GM12878 (cell line): ENCODE measurements at regions of chr6 and their contacts with region 1.

Region 1: DNA sequence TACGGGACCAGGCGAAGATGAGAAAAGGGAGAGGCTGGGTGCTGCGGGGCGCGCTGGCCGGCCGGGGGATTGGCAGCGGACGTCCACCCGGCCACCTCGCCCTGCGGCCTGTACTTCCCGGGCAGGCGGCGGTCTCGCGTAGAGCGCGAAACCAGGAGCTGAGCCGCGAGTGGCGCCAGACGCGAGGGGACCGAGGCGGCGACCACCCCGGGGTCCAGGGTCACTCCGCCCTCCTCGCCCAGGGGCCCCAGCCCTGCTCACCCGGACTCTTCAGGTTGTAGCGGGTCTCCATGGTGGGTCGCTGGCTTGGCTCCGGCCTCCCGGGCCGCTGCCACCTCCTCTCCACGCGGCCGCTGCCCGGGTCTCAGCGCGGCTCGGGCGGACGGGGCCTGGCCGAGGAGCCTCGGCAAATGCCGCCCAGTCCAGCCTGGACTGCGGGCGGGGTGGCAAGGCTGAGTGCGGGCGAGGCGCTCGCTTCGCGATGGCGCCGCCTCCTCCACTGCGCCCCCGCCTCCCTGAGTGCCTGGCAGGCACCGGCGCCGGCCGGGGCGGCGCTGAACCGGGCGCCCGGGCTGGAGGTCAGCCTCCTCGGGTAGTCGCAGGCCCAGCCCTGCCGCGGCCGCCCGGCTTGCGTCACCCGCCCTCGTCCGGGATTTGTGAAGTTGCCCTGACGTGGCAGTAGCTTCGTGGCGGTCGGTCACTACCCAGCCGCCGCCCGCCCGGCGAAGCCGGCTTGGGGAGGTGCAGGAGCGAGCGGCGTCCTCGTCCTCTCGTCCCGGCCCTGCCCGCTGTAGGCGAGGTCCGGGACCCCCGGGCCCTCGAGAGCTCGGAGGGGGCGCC is at the start of gene UBE2J1:
- DNase-seq: no peak
- ATAC-seq: peak; percentile 79
- H3K4me3 ChIP-seq: peak within 1 kb of the TSS; percentile 98
- H3K27ac ChIP-seq: peak within 1 kb of the TSS; percentile 97
- H3K4me1 ChIP-seq: peaks cover 50% of the 10 kb centered on the region
- H3K27me3 ChIP-seq: no peaks in the 10 kb centered on the region
- CTCF ChIP-seq: no peak
- EP300 ChIP-seq: peak in 1 of 2 experiments; percentile 23; a peak in 1 of 4 replicates
- POLR2A ChIP-seq: peak; percentile 95
- RAD21 ChIP-seq: no peak
- polyA plus RNA-seq, gene UBE2J1: 48.7 to 69.1 TPM

Region 2: DNA sequence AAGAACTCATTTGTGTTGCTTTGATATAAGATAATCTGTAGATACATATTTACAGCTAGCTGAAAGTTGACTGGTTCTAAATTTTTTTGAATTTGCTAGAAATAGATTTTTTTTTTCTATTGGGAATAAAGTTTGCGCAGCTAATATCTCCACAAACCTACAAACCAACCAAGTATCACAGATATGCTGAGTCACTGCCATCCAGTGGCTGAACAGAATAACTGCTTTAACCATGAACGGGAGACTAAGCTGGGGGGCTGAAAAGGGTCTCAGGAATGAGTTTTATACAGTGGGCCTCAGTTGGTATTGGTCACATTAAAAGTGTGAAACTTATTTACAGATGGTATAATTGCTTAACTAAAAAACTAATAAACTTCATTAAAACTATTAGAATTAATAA is 859.7 kb before region 1 on chr6:
- CTCF ChIA-PET with region 1: no interaction called
- POLR2A ChIA-PET with region 1: no interaction called
- RAD21 ChIA-PET with region 1: no interaction called
- SMC1A ChIA-PET with region 1: no interaction called
- in situ Hi-C with region 1: no loop called
- intact Hi-C with region 1: no loop called
- DNase-seq: no peak
- ATAC-seq: no peak
- H3K4me3 ChIP-seq: no peak overlapping the region
- H3K27ac ChIP-seq: peak overlapping the region; percentile 91
- H3K4me1 ChIP-seq: peaks cover 16% of the 10 kb centered on the region
- H3K27me3 ChIP-seq: no peaks in the 10 kb centered on the region
- CTCF ChIP-seq: peak; percentile 10 to 27 (median 15); a peak in 2 of 6 replicates
- EP300 ChIP-seq: no peak
- POLR2A ChIP-seq: no peak
- RAD21 ChIP-seq: peak; percentile 52

Region 3: GRCh38 chr6:89066940-89067646 is 285.4 kb before region 1 on chr6:
- CTCF ChIA-PET with region 1: no interaction called
- POLR2A ChIA-PET with region 1: no interaction called
- RAD21 ChIA-PET with region 1: no interaction called
- SMC1A ChIA-PET with region 1: no interaction called
- in situ Hi-C with region 1: no loop called
- intact Hi-C with region 1: no loop called
- DNase-seq: no peak
- ATAC-seq: no peak
- H3K4me3 ChIP-seq: no peak overlapping the region
- H3K27ac ChIP-seq: no peak overlapping the region
- H3K4me1 ChIP-seq: no peaks in the 10 kb centered on the region
- H3K27me3 ChIP-seq: no peaks in the 10 kb centered on the region; a peak in 1 of 4 replicates
- CTCF ChIP-seq: no peak
- EP300 ChIP-seq: no peak
- POLR2A ChIP-seq: no peak
- RAD21 ChIP-seq: no peak

Region 4: DNA sequence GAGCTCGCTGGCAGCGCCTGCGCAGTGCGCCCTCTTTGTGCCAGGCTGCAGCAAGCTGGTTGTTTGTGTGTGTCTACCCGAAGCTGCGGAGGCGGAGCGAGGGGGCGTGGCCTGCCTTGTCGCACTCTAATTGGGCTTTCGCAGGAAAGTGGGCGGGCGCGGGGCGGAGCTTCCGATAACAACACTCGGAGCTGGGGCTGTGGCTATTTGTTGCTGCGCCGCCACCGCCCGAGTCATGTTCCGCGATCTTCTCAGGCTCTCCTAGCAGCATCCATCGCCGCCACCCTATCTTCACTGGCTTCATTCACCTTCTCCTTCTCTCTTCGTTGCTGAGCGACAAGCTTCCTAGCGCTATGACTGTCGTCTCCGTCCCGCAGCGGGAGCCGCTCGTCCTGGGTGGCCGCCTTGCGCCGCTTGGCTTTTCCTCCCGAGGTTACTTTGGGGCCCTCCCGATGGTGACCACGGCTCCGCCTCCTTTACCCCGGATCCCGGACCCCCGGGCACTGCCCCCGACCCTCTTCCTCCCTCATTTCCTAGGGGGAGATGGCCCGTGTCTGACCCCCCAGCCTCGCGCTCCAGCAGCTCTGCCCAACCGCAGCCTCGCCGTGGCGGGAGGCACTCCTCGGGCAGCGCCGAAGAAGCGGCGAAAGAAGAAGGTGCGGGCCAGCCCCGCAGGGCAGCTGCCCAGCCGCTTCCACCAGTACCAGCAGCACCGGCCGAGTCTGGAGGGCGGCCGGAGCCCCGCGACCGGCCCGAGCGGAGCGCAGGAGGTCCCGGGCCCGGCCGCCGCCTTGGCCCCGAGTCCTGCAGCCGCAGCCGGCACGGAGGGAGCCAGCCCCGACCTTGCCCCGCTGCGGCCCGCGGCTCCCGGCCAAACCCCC is 271.7 kb before region 1 on chr6 and contains the start of gene PNRC1:
- CTCF ChIA-PET with region 1: no interaction called
- POLR2A ChIA-PET with region 1: interaction called, 24 read pairs
- RAD21 ChIA-PET with region 1: interaction called, 6 read pairs
- SMC1A ChIA-PET with region 1: interaction called, 21 read pairs
- in situ Hi-C with region 1: no loop called
- intact Hi-C with region 1: loop called (anchors 2 kb)
- DNase-seq: peak; percentile 96
- ATAC-seq: peak; percentile 85
- H3K4me3 ChIP-seq: peak within 1 kb of the TSS; percentile 93
- H3K27ac ChIP-seq: peak within 1 kb of the TSS; percentile 99
- H3K4me1 ChIP-seq: no peaks in the 10 kb centered on the region
- H3K27me3 ChIP-seq: no peaks in the 10 kb centered on the region
- CTCF ChIP-seq: no peak
- EP300 ChIP-seq: no peak; a peak in 1 of 4 replicates
- POLR2A ChIP-seq: peak; percentile 100
- RAD21 ChIP-seq: no peak
- polyA plus RNA-seq, gene PNRC1: 7.6 to 9.5 TPM

Region 5: GRCh38 chr6:89145787-89146646 is 206.5 kb before region 1 on chr6 and contains the start of gene PM20D2:
- CTCF ChIA-PET with region 1: interaction called, 5 read pairs
- POLR2A ChIA-PET with region 1: interaction called, 9 read pairs
- RAD21 ChIA-PET with region 1: interaction called, 14 read pairs
- SMC1A ChIA-PET with region 1: interaction called, 3 read pairs
- in situ Hi-C with region 1: no loop called
- intact Hi-C with region 1: loop called (anchors 5 kb)
- DNase-seq: no peak
- ATAC-seq: peak; percentile 84
- H3K4me3 ChIP-seq: peak within 1 kb of the TSS; percentile 71
- H3K27ac ChIP-seq: peak within 1 kb of the TSS; percentile 75
- H3K4me1 ChIP-seq: peaks cover 16% of the 10 kb centered on the region
- H3K27me3 ChIP-seq: no peaks in the 10 kb centered on the region
- CTCF ChIP-seq: no peak
- EP300 ChIP-seq: no peak
- POLR2A ChIP-seq: peak; percentile 86
- RAD21 ChIP-seq: no peak
- polyA plus RNA-seq, gene PM20D2: 7.8 to 8.3 TPM

Region 6: GRCh38 chr6:89281779-89282246 is 70.7 kb before region 1 on chr6:
- CTCF ChIA-PET with region 1: interaction called, 22 read pairs
- POLR2A ChIA-PET with region 1: interaction called, 3 read pairs
- RAD21 ChIA-PET with region 1: interaction called, 8 read pairs
- SMC1A ChIA-PET with region 1: interaction called, 10 read pairs
- in situ Hi-C with region 1: no loop called
- intact Hi-C with region 1: loop called (anchors 5 kb)
- DNase-seq: no peak
- ATAC-seq: peak; percentile 99
- H3K4me3 ChIP-seq: no peak overlapping the region
- H3K27ac ChIP-seq: no peak overlapping the region
- H3K4me1 ChIP-seq: peaks cover 7% of the 10 kb centered on the region
- H3K27me3 ChIP-seq: no peaks in the 10 kb centered on the region
- CTCF ChIP-seq: peak; percentile 60 to 86 (median 79)
- EP300 ChIP-seq: no peak
- POLR2A ChIP-seq: no peak
- RAD21 ChIP-seq: peak; percentile 77

Region 7: DNA sequence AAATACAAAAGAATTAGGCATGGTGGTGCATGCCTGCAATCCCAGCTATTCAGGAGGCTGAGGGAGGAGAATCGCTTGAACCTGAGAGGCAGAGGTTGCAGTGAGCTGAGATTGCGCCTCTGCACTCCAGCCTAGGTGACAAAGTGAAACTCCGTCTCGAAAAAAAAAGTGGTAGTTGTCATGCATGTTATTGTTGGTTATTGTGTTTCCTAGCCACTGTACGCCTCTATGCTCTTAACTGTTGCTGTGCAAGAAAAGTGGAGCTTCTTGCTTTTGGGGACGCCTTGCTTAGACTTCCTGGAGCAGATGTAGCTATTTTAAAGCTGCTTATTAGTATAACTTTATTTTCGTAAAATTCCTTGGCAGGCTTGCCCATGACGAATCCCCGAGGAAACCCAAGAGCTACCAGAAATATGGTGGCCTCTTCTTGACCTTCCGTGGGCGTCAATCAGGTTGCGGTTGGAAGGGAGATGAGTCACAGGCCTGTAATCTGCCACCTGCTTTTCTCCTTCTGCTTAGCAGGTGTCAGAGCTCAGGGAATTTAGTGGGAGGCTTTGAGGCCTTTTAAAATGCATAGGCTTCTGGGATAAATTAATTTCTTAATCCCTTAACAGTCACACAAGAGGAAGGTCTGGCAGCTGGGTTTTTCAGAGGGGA is 54.7 kb before region 1 on chr6:
- CTCF ChIA-PET with region 1: interaction called, 32 read pairs
- POLR2A ChIA-PET with region 1: interaction called, 45 read pairs
- RAD21 ChIA-PET with region 1: interaction called, 53 read pairs
- SMC1A ChIA-PET with region 1: interaction called, 71 read pairs
- in situ Hi-C with region 1: no loop called
- intact Hi-C with region 1: loop called (anchors 2 kb)
- DNase-seq: peak; percentile 80
- ATAC-seq: peak; percentile 87
- H3K4me3 ChIP-seq: peak overlapping the region; percentile 48; the same call in 1 of the 2 replicates
- H3K27ac ChIP-seq: peak overlapping the region; percentile 94
- H3K4me1 ChIP-seq: peaks cover 27% of the 10 kb centered on the region
- H3K27me3 ChIP-seq: no peaks in the 10 kb centered on the region
- CTCF ChIP-seq: no peak
- EP300 ChIP-seq: peak; percentile 87
- POLR2A ChIP-seq: no peak
- RAD21 ChIP-seq: no peak

Region 8: DNA sequence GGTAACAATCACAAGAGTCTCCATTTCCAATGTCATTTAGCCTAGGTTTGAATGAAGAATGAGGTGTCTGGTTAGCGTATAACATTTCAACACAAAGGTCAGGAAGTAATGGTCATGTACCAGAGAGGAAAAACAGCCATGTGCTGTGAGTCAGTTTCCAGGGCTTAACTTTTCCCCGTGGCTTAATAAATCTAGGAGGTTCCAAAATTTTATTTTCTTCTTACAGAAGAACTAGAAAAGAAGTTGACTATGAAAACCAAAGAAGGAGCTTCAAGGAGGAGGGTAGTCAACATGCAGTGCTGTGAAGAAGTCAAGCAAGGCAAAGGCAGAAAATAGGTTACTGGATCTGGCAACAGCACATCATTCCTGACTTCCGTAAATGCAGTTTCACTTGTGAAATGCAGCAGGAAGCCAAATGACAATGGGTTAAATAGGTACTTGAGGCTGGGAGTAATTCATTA is 29.0 kb before region 1 on chr6:
- CTCF ChIA-PET with region 1: interaction called, 3 read pairs
- POLR2A ChIA-PET with region 1: interaction called, 3 read pairs
- RAD21 ChIA-PET with region 1: interaction called, 3 read pairs
- SMC1A ChIA-PET with region 1: interaction called, 10 read pairs
- in situ Hi-C with region 1: no loop called
- intact Hi-C with region 1: no loop called
- DNase-seq: no peak
- ATAC-seq: no peak
- H3K4me3 ChIP-seq: no peak overlapping the region
- H3K27ac ChIP-seq: no peak overlapping the region
- H3K4me1 ChIP-seq: peaks cover 8% of the 10 kb centered on the region
- H3K27me3 ChIP-seq: no peaks in the 10 kb centered on the region
- CTCF ChIP-seq: no peak
- EP300 ChIP-seq: no peak
- POLR2A ChIP-seq: no peak
- RAD21 ChIP-seq: no peak

Region 9: DNA sequence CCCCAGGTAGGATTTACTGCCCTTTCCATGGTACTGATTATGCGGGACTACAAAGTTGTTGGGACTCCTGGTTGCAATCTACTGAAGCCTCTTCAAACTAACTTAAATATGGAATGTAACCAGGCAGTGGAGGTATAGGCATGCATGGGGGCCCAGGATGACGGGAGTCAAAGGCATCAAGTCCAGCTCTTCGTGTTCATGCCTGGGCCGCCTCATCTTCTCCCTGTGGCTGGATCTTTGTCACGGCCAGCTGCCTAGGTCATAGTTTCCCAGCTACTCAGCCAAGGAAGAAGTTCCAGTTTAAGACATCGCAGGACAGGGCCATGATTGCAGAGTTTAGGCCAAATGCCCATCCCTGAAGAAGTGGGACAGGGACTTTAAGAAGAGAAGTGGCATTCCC is 265.5 kb after region 1 on chr6:
- CTCF ChIA-PET with region 1: no interaction called
- POLR2A ChIA-PET with region 1: no interaction called
- RAD21 ChIA-PET with region 1: no interaction called
- SMC1A ChIA-PET with region 1: no interaction called
- in situ Hi-C with region 1: no loop called
- intact Hi-C with region 1: no loop called
- DNase-seq: no peak
- ATAC-seq: no peak
- H3K4me3 ChIP-seq: no peak overlapping the region
- H3K27ac ChIP-seq: no peak overlapping the region
- H3K4me1 ChIP-seq: no peaks in the 10 kb centered on the region
- H3K27me3 ChIP-seq: no peaks in the 10 kb centered on the region
- CTCF ChIP-seq: no peak
- EP300 ChIP-seq: no peak
- POLR2A ChIP-seq: no peak
- RAD21 ChIP-seq: no peak

Region 10: GRCh38 chr6:89819336-89820130 is 467.0 kb after region 1 on chr6 and contains the start of gene MDN1:
- CTCF ChIA-PET with region 1: no interaction called
- POLR2A ChIA-PET with region 1: no interaction called
- RAD21 ChIA-PET with region 1: no interaction called
- SMC1A ChIA-PET with region 1: no interaction called
- in situ Hi-C with region 1: no loop called
- intact Hi-C with region 1: loop called (anchors 10 kb)
- DNase-seq: peak; percentile 73
- ATAC-seq: peak; percentile 95
- H3K4me3 ChIP-seq: peak within 1 kb of the TSS; percentile 80
- H3K27ac ChIP-seq: peak within 1 kb of the TSS; percentile 88
- H3K4me1 ChIP-seq: peaks cover 10% of the 10 kb centered on the region; the same call in 1 of the 2 replicates
- H3K27me3 ChIP-seq: no peaks in the 10 kb centered on the region
- CTCF ChIP-seq: no peak
- EP300 ChIP-seq: no peak
- POLR2A ChIP-seq: peak; percentile 97
- RAD21 ChIP-seq: no peak
- polyA plus RNA-seq, gene MDN1: 19.0 to 19.6 TPM